Sigmoid colon (tissue), 7 donors: ENCODE measurements at regions of chr1 and their contacts with region 1.

Region 1: DNA sequence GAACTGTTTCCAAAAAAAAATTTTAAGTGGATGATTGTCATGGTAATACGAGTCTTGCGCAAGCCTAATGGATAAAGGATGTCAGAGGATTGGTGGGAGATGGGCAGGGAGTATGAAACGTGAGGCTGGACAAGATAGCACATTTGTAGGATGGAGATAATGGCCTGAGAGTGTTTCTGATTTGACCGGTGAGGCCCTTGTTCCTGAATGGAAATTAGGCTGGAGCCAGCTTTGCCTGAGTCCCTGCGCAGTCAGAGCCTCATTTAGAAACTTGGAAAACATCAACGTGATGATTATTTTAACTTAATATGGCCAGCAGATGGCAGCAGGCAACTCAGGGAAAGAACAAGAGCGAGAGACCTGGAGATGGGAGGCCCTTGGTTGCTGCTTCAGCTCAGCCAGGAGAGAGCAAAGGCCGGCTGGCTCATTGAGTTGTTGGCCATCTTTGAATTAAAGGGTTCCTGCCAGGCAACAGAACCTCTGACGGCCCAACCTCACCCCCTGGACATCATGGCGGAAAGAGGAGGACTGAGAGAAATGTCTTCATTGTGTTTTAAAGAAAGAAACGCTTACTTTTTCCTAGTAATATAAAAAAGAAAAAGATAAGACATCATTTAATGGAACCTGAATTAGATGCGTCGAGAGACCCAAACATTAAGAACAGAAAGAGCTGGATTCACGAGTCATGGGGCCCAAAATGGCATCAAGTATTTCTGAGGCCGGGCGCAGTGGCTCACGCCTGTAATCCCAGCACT is 80.3 kb downstream of the SELENOF start:
- DNase-seq: peak; percentile 87
- H3K4me3 ChIP-seq: no peak overlapping the region
- H3K27ac ChIP-seq: no peak overlapping the region
- H3K4me1 ChIP-seq: no peaks in the 10 kb centered on the region
- H3K27me3 ChIP-seq: no peaks in the 10 kb centered on the region
- CTCF ChIP-seq: peak; percentile 29 to 57 (median 50)
- EP300 ChIP-seq: no peak
- POLR2A ChIP-seq: no peak

Region 2: GRCh38 chr1:86352096-86352495 is 481.5 kb before region 1 on chr1:
- intact Hi-C with region 1: no loop called
- DNase-seq: no peak
- H3K4me3 ChIP-seq: no peak overlapping the region
- H3K27ac ChIP-seq: no peak overlapping the region
- H3K4me1 ChIP-seq: no peaks in the 10 kb centered on the region
- H3K27me3 ChIP-seq: no peaks in the 10 kb centered on the region
- CTCF ChIP-seq: no peak
- EP300 ChIP-seq: no peak
- POLR2A ChIP-seq: no peak

Region 3: DNA sequence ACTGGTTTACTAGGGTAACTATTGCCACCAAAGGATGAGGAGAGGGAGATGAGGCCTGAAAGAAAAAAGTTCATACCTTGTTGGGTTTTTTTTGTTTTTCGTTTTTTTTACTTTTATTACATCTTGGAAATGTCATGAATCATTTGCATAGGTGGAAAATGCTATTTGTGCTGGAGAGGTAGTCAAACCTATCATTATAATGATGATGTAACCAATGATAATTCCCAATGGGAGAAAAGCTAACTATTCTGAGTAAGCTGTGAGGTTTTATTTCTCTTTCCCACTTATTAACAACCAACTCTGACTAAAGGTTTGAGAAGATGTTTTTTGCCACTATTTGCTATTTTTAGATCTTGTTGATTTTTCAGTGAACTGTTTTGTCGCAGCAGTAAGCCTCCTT is 100.3 kb before region 1 on chr1:
- intact Hi-C with region 1: no loop called
- DNase-seq: no peak
- H3K4me3 ChIP-seq: no peak overlapping the region
- H3K27ac ChIP-seq: no peak overlapping the region
- H3K4me1 ChIP-seq: no peaks in the 10 kb centered on the region
- H3K27me3 ChIP-seq: no peaks in the 10 kb centered on the region
- CTCF ChIP-seq: no peak
- EP300 ChIP-seq: no peak
- POLR2A ChIP-seq: no peak

Region 4: DNA sequence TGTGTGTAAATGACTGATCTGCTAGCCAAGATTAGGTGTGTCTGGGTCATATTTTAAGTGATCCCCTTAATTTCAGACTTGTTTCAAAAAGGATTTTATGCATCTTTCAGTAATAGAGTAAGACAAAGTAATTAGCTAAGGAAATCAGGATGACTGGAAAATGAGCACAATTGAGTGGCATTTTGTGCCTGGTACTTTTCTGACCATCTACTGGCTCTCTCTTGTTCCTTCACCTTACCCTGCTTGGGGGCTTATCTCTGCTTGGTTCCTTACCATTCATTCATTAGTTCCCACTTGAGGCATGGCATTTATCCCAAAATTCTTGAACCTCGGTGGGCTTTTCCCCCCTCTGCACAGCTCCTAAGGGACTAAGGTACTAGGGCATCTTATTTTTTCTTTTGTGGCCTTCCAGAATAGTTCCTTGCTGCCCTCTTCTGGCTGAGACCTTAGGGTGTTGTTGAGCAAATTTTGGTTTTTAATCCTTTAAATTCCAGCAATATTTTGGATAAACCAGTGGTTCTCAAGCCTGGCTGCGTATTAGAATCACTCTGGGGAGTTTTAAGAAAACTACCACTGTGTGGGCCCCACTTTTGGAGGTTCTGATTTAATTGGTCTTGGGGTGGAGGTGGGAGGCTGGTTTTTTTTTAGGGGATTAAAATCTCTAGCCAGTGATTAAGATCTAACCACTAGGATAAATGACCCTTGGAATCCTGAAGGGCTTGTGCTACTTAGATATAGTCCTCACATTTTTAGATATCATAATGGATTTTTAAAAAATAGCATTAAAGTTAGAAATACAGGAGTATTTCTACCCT is 131.6 kb after region 1 on chr1:
- intact Hi-C with region 1: loop called (anchors 1 kb)
- DNase-seq: no peak
- H3K4me3 ChIP-seq: no peak overlapping the region
- H3K27ac ChIP-seq: no peak overlapping the region
- H3K4me1 ChIP-seq: no peaks in the 10 kb centered on the region
- H3K27me3 ChIP-seq: no peaks in the 10 kb centered on the region
- CTCF ChIP-seq: peak in 3 of 4 experiments; percentile 32 to 52 (median 38)
- EP300 ChIP-seq: no peak
- POLR2A ChIP-seq: no peak

Region 5: GRCh38 chr1:87084244-87084836 is 250.7 kb after region 1 on chr1:
- intact Hi-C with region 1: loop called (anchors 5 kb)
- DNase-seq: no peak
- H3K4me3 ChIP-seq: no peak overlapping the region
- H3K27ac ChIP-seq: no peak overlapping the region
- H3K4me1 ChIP-seq: peaks cover 0 to 4% (median 0%) of the 10 kb centered on the region in 4 donors
- H3K27me3 ChIP-seq: no peaks in the 10 kb centered on the region
- CTCF ChIP-seq: peak in 2 of 4 experiments; percentile 26 to 71
- EP300 ChIP-seq: no peak
- POLR2A ChIP-seq: no peak